IMR-90 (cell line): ENCODE measurements at regions of chr10 and their contacts with region 1.

Region 1: DNA sequence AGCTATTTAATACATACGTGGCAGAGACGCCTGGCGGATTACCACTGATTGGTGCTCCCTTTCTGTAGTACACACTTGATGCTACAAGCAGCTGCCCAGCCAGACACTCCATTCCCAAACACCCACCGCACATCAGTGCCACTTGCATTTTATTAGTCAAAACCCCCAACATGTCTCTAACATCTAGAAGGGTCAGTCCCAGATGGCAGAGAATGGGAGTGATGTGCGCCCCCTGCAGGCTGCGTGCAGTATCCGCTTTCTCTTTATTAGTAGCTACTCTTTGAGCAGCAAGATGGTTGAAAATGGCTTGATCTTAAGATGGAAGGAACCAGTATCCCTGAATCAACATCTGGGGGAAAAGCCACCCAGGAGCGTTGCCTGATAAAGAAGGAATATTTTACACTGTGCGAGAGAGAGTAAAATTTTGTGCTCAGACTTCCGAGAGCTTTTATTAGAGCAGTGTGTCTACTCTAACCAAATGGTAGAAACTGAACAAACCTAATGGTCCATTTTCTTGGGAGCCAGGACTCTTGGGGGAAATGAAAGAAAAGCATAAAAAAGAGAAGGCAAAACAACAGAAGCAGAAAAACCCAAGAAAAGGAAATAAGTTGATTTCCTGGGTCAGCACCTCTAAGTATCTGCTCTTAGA is 78.3 kb downstream of the ST8SIA6 start:
- DNase-seq: peak; percentile 2
- ATAC-seq: no peak
- H3K4me3 ChIP-seq: no peak overlapping the region
- H3K27ac ChIP-seq: no peak overlapping the region
- H3K4me1 ChIP-seq: no peaks in the 10 kb centered on the region
- H3K27me3 ChIP-seq: peaks cover 21% of the 10 kb centered on the region
- CTCF ChIP-seq: peak; percentile 44
- POLR2A ChIP-seq: no peak
- RAD21 ChIP-seq: peak; percentile 9; the same call in 1 of the 2 replicates

Region 2: DNA sequence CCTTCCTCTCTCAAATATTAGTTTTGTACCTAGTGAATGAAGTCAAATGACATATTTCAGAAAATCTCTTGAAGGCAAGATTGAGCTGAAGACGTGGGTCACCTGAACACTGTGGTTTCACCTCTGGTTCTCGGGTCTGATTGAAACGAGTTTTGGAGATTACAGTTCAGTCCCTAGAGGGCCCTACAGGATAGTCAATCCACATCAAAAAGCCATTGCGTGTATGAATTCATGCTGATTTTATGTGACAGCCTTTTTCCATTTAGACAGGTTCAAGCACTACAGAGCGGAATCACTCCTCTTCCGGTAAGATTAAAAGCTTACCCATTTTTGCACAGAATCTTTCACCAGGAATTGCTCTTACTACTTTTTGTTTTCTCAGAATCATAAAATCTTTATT is 85.8 kb before region 1 on chr10:
- CTCF ChIA-PET with region 1: no interaction called
- POLR2A ChIA-PET with region 1: no interaction called
- dilution Hi-C with region 1: no loop called
- in situ Hi-C with region 1: no loop called
- intact Hi-C with region 1: loop called (anchors 5 kb)
- DNase-seq: peak; percentile 8
- ATAC-seq: no peak
- H3K4me3 ChIP-seq: no peak overlapping the region
- H3K27ac ChIP-seq: no peak overlapping the region
- H3K4me1 ChIP-seq: no peaks in the 10 kb centered on the region
- H3K27me3 ChIP-seq: peaks cover 21% of the 10 kb centered on the region
- CTCF ChIP-seq: 0 out of 2 replicates have a peak, but pooled peaks have one; percentile 21
- POLR2A ChIP-seq: no peak
- RAD21 ChIP-seq: peak; percentile 34; the same call in 1 of the 2 replicates

Region 3: GRCh38 chr10:17365402-17365801 is 10.7 kb before region 1 on chr10:
- CTCF ChIA-PET with region 1: interaction called, 15 read pairs
- POLR2A ChIA-PET with region 1: no interaction called
- dilution Hi-C with region 1: no loop called
- in situ Hi-C with region 1: no loop called
- intact Hi-C with region 1: no loop called
- DNase-seq: no peak
- ATAC-seq: no peak
- H3K4me3 ChIP-seq: no peak overlapping the region
- H3K27ac ChIP-seq: no peak overlapping the region
- H3K4me1 ChIP-seq: no peaks in the 10 kb centered on the region
- H3K27me3 ChIP-seq: no peaks in the 10 kb centered on the region; the same call in none of the 2 replicates
- CTCF ChIP-seq: no peak
- POLR2A ChIP-seq: no peak
- RAD21 ChIP-seq: no peak